ENCODE measurements at regions of chr4 and their contacts with region 1.

Region 1: GRCh38 chr4:76430519-76431388 is 4.3 kb upstream of the SHROOM3 start:
- DNase-seq: no peak
- ATAC-seq: peak; percentile 37
- H3K4me3 Mint-ChIP-seq: no peak overlapping the region
- H3K27ac Mint-ChIP-seq: peak overlapping the region; percentile 4; the same call in 1 of the 2 replicates
- H3K4me1 Mint-ChIP-seq: peaks cover 43% of the 10 kb centered on the region
- H3K27me3 Mint-ChIP-seq: no peaks in the 10 kb centered on the region
- CTCF ChIP-seq: peak; percentile 40; the same call in 1 of the 2 replicates

Region 2: GRCh38 chr4:76388160-76388908 is 42.4 kb before region 1 on chr4:
- CTCF ChIA-PET with region 1: no interaction called
- POLR2A ChIA-PET with region 1: no interaction called
- DNase-seq: no peak
- ATAC-seq: peak; percentile 73
- H3K4me3 Mint-ChIP-seq: no peak overlapping the region
- H3K27ac Mint-ChIP-seq: no peak overlapping the region
- H3K4me1 Mint-ChIP-seq: peaks cover 45% of the 10 kb centered on the region
- H3K27me3 Mint-ChIP-seq: no peaks in the 10 kb centered on the region
- CTCF ChIP-seq: no peak

Region 3: GRCh38 chr4:76504613-76505465 is 74.1 kb after region 1 on chr4:
- CTCF ChIA-PET with region 1: interaction called, 179 read pairs
- POLR2A ChIA-PET with region 1: no interaction called
- DNase-seq: no peak
- ATAC-seq: peak; percentile 60
- H3K4me3 Mint-ChIP-seq: no peak overlapping the region
- H3K27ac Mint-ChIP-seq: no peak overlapping the region
- H3K4me1 Mint-ChIP-seq: no peaks in the 10 kb centered on the region
- H3K27me3 Mint-ChIP-seq: no peaks in the 10 kb centered on the region
- CTCF ChIP-seq: peak; percentile 49

Region 4: GRCh38 chr4:76758290-76758882 is 327.6 kb after region 1 on chr4:
- CTCF ChIA-PET with region 1: interaction called, 12 read pairs
- POLR2A ChIA-PET with region 1: interaction called, 3 read pairs
- DNase-seq: no peak
- ATAC-seq: peak; percentile 87
- H3K4me3 Mint-ChIP-seq: no peak overlapping the region
- H3K27ac Mint-ChIP-seq: peak overlapping the region; percentile 16
- H3K4me1 Mint-ChIP-seq: peaks cover 2% of the 10 kb centered on the region; the same call in 1 of the 2 replicates
- H3K27me3 Mint-ChIP-seq: no peaks in the 10 kb centered on the region
- CTCF ChIP-seq: peak; percentile 63